ENCODE measurements at regions of chr1 and their contacts with region 1.

Region 1: GRCh38 chr1:100037927-100038659 is 68.3 kb downstream of the SLC35A3 start:
- DNase-seq: peak; percentile 91 to 95 (median 93)
- ATAC-seq: peak; percentile 98 to 100 (median 99)
- H3K4me3 ChIP-seq: peak overlapping the region; percentile 79 to 96 (median 89)
- H3K27ac ChIP-seq: peak overlapping the region; percentile 86 to 99 (median 96)
- H3K4me1 ChIP-seq: peaks cover 0 to 47% (median 24%) of the 10 kb centered on the region in 12 donors
- H3K27me3 ChIP-seq: no peaks in the 10 kb centered on the region
- CTCF ChIP-seq: no peak
- POLR2A ChIP-seq: peak; percentile 75 to 90

Region 2: DNA sequence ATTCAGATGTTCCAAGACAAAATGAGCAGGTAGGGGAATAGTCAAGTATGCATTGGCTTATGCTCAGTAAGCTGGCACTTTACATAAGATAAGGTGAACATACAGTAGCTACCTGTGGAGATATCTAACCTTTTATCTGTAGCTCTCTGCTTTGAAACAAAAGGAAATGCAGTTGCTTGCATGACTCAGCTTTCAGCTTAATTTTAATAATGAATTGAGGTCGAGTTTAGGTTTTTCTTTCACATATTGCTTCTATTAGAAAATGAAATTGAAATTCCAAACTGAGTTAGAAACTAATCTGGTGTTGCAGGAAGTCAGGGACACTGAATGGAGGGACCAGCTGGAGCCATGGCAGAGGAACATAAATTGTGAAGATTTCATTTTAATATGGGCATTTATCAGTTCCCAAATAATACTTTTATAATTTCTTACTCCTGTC is 280.0 kb before region 1 on chr1:
- intact Hi-C with region 1: no loop called
- DNase-seq: no peak
- ATAC-seq: no peak
- H3K4me3 ChIP-seq: no peak overlapping the region
- H3K27ac ChIP-seq: peak overlapping the region in 1 of 12 donors; percentile 72
- H3K4me1 ChIP-seq: peaks cover 0 to 40% (median 4%) of the 10 kb centered on the region in 12 donors
- H3K27me3 ChIP-seq: no peaks in the 10 kb centered on the region
- CTCF ChIP-seq: no peak
- POLR2A ChIP-seq: no peak

Region 3: DNA sequence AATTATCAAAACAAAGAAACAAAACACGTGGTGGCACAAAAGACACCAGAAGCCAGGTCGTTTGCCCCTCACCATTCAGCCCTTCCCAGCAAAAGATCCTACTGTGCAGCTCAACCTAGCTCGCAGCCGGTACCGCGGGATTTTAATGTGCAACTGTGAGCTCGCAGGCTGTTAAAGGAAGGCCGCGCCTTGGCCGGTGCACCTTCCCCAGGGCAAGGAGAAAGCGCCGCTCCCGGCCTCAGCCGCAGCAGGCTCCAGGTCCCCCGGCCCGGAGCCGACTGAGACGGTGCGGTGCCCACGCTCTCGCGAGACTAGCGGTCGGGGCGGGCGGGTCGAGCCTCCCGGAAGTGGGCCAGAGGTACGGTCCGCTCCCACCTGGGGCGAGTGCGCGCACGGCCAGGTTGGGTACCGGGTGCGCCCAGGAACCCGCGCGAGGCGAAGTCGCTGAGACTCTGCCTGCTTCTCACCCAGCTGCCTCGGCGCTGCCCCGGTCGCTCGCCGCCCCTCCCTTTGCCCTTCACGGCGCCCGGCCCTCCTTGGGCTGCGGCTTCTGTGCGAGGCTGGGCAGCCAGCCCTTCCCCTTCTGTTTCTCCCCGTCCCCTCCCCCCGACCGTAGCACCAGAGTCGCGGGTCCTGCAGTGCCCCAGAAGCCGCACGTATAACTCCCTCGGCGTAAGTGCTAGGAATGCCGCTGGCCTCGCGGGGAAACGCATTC is 188.2 kb before region 1 on chr1 and contains the start of gene AGL:
- intact Hi-C with region 1: loop called in 1 of 10 experiments (anchors 5 kb)
- DNase-seq: peak; percentile 86 to 94 (median 89)
- ATAC-seq: peak; percentile 88 to 97 (median 96)
- H3K4me3 ChIP-seq: peak within 1 kb of the TSS; percentile 62 to 90 (median 82)
- H3K27ac ChIP-seq: peak within 1 kb of the TSS; percentile 60 to 96 (median 89)
- H3K4me1 ChIP-seq: peaks cover 0 to 21% (median 8%) of the 10 kb centered on the region in 12 donors
- H3K27me3 ChIP-seq: no peaks in the 10 kb centered on the region
- CTCF ChIP-seq: no peak
- POLR2A ChIP-seq: peak in 1 of 2 donors; percentile 65
- total RNA-seq, gene AGL: 19.1 to 70.4 (median 52.9) TPM

Region 4: DNA sequence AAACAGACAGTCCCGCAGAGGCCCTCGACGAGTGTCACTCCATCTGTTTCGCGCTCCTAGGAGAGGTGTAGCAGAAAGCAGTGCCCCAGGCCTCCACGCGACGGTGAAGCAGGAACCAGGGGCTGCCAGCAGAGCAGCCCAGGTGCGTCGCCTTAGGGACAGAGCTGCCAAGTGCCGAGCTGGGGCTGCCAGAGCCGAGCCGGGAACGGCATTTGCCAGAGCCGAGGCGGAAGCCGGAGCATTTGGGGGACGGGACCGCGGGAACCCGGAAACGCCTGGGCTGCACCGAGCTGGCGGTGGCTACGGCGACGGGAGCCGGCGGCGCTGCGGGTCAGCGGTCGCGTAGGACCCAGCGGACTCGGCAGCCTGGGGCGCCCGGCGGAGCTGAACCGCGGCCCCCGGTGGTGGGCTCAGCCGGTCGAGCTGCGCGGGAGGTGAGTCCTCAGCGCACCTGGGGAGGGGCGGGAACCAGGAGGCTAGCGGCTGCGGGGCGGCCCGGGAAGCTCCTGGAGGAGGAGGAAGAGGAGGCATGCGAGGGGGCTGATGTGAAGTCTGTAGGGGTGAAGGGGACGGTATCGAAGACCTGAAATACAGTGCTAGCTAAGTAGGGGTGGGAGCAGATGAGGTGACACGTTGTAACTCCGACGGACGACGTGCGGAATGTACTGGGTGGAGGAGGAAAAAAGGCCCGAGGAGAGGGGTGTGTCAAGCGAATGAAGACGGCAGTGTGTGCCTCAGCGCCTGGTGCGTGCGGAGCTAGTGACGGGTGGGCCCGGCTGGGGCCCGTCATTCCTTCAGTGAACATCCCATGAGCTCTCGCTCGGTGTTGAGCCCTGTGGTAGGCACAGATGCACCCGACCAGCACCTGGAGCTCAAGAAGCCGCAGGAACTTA is 68.1 kb before region 1 on chr1 and contains the start of gene SLC35A3:
- intact Hi-C with region 1: loop called in 1 of 10 experiments (anchors 2 kb)
- DNase-seq: peak; percentile 78 to 92 (median 85)
- ATAC-seq: peak; percentile 84 to 99 (median 98)
- H3K4me3 ChIP-seq: peak within 1 kb of the TSS; percentile 49 to 99 (median 93)
- H3K27ac ChIP-seq: peak within 1 kb of the TSS; percentile 49 to 85 (median 73)
- H3K4me1 ChIP-seq: peaks cover 0 to 28% (median 11%) of the 10 kb centered on the region in 12 donors
- H3K27me3 ChIP-seq: no peaks in the 10 kb centered on the region
- CTCF ChIP-seq: peak in 2 of 12 donors; percentile 6 to 16
- POLR2A ChIP-seq: peak in 1 of 2 donors; percentile 52
- total RNA-seq, gene SLC35A3: 5.2 to 10.9 (median 7.1) TPM

Region 5: GRCh38 chr1:99986656-99987225 is 51.4 kb before region 1 on chr1:
- intact Hi-C with region 1: loop called in 1 of 10 experiments (anchors 10 kb)
- DNase-seq: no peak
- ATAC-seq: no peak
- H3K4me3 ChIP-seq: no peak overlapping the region
- H3K27ac ChIP-seq: peak overlapping the region in 2 of 12 donors; percentile 29 to 33
- H3K4me1 ChIP-seq: peaks cover 0 to 11% (median 2%) of the 10 kb centered on the region in 12 donors
- H3K27me3 ChIP-seq: no peaks in the 10 kb centered on the region
- CTCF ChIP-seq: no peak
- POLR2A ChIP-seq: no peak

Region 6: GRCh38 chr1:100152271-100152670 is 114.2 kb after region 1 on chr1:
- intact Hi-C with region 1: no loop called
- DNase-seq: no peak
- ATAC-seq: no peak
- H3K4me3 ChIP-seq: no peak overlapping the region
- H3K27ac ChIP-seq: no peak overlapping the region
- H3K4me1 ChIP-seq: no peaks in the 10 kb centered on the region
- H3K27me3 ChIP-seq: no peaks in the 10 kb centered on the region
- CTCF ChIP-seq: no peak
- POLR2A ChIP-seq: no peak

Region 7: DNA sequence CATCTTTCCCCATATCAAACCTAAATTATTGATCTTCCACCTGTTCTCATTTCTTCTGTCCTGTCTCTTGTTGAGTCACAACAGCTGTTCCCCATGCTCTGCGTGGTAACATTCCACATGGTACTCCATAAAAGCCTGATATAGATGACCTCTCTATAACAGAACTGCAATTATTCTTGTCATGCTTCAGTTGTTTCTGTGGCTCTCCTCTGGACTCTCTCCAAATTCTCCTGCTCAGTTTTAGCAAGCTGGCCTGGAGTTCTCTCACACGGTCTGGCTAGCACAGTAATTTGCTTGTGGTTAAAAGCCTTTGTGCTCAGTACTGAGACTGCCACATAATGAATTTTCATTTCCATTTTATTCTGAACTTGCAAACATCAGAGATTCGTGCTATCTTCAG is 150.5 kb after region 1 on chr1:
- intact Hi-C with region 1: no loop called
- DNase-seq: peak in 4 of 5 donors; percentile 33 to 39 (median 36)
- ATAC-seq: peak; percentile 87 to 89 (median 88)
- H3K4me3 ChIP-seq: peak overlapping the region in 3 of 12 donors; percentile 4 to 18 (median 8)
- H3K27ac ChIP-seq: peak overlapping the region; percentile 59 to 93 (median 80)
- H3K4me1 ChIP-seq: peaks cover 0 to 19% (median 2%) of the 10 kb centered on the region in 12 donors
- H3K27me3 ChIP-seq: no peaks in the 10 kb centered on the region
- CTCF ChIP-seq: no peak
- POLR2A ChIP-seq: no peak

Measured in heart left ventricle (tissue), 16 donors.